K562 (cell line): ENCODE measurements at regions of chr6 and their contacts with region 1.

Region 1: GRCh38 chr6:4775584-4776494 is at the start of gene CDYL:
- DNase-seq: peak; percentile 93 to 97 (median 96)
- ATAC-seq: peak; percentile 92
- H3K4me3 ChIP-seq: peak within 1 kb of the TSS; percentile 57
- H3K27ac ChIP-seq: peak within 1 kb of the TSS; percentile 80
- H3K4me1 ChIP-seq: peaks cover 10 to 23% of the 10 kb centered on the region in 2 experiments
- H3K27me3 ChIP-seq: no peaks in the 10 kb centered on the region; a peak in 1 of 5 replicates
- CTCF ChIP-seq: no peak
- EP300 ChIP-seq: no peak
- POLR2A ChIP-seq: no peak
- RAD21 ChIP-seq: no peak
- polyA plus RNA-seq, gene CDYL: 8.1 to 8.9 TPM

Region 2: GRCh38 chr6:3822747-3823450 is 952.9 kb before region 1 on chr6:
- CTCF ChIA-PET with region 1: no interaction called
- POLR2A ChIA-PET with region 1: no interaction called
- in situ Hi-C with region 1: no loop called
- intact Hi-C with region 1: no loop called
- DNase-seq: no peak
- ATAC-seq: no peak
- H3K4me3 ChIP-seq: no peak overlapping the region
- H3K27ac ChIP-seq: no peak overlapping the region
- H3K4me1 ChIP-seq: no peaks in the 10 kb centered on the region
- H3K27me3 ChIP-seq: peaks cover 59 to 77% of the 10 kb centered on the region in 2 experiments
- CTCF ChIP-seq: no peak
- EP300 ChIP-seq: no peak
- POLR2A ChIP-seq: no peak
- RAD21 ChIP-seq: no peak

Region 3: DNA sequence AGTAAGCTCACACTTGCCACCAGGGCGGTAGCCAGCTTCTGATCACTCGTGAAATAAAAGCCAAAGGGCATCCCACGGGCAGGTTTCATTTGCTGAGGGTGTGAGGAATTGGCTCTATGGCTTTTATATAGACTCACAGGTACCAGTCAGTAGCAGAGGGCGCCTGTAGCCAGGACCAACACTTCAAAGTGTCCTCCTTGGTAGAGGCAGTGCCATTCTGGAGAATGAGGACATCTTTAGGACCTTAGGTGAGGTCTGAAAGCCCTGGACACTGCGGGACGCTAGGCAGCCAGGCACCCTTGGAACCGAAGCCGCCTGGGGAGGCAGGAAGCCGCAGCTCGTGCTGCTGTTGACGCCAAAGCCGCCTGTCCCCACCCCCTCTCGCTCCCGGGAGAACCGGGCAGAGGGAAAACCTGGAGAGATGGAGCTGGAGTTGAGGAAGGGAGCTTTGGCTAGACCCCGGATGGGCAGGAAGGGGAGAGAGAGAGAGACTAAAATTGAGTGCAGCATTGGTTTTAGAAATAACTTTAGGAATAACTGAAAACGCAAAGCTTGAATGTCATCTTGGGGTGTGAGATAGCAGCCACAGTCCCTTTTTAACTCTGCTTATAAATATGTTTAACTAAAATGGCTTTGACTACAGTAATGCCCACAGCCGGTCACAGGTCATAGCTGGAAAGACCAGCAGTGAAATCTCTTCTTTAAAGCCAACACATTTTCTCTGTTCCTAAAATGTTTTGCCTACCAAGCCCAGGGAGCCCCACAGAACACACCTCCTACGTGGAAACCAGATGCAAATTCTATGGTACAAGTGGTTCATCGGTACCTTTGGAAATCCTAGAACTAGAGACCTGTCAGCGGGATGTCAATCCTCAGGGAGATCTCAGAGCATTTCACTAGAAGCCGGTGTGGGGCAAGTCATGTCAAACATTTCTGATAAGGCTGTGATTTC is 128.1 kb before region 1 on chr6:
- CTCF ChIA-PET with region 1: no interaction called
- POLR2A ChIA-PET with region 1: interaction called, 3 read pairs
- in situ Hi-C with region 1: no loop called
- intact Hi-C with region 1: loop called (anchors 2 kb)
- DNase-seq: peak; percentile 87 to 90 (median 87)
- ATAC-seq: peak; percentile 97
- H3K4me3 ChIP-seq: peak overlapping the region; percentile 0; the same call in 1 of the 2 replicates
- H3K27ac ChIP-seq: peak overlapping the region; percentile 51; the same call in 2 of the 3 replicates
- H3K4me1 ChIP-seq: peaks cover 6 to 7% of the 10 kb centered on the region in 2 experiments; a peak in 4 of 5 replicates
- H3K27me3 ChIP-seq: no peaks in the 10 kb centered on the region; a peak in 1 of 5 replicates
- CTCF ChIP-seq: no peak
- EP300 ChIP-seq: peak; percentile 72
- POLR2A ChIP-seq: no peak
- RAD21 ChIP-seq: peak; percentile 29 to 57

Region 4: DNA sequence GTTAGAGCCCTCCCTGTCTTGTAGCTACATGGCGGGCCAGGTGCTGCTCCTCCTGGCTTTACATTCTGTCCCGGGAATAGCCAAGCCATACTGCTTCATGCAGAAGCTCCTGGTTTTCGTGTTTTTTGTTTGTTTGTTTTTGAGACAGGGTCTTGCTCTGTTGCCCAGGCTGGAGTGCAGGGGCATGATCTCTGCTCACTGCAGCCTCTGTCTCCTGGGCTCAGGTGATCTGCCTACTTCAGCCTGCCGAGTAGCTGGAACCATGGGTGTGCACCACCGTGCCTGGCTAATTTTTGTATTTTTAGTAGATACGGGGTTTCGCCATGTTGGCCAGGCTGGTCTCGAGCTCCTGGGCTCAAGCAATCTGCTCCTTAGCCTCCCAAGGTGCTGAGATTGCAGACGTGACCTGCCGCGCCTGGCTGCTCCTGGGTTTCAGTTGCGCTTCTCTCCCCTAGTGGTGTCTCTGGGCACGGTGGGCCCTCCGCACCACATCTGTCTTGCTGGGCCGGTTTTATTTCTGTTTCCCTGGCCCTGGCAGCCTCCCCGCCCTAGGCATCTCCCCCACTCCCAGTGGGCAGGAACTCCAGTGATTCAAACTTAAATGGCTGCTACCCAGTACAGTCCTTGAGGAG is 13.2 kb after region 1 on chr6:
- CTCF ChIA-PET with region 1: no interaction called
- POLR2A ChIA-PET with region 1: interaction called, 12 read pairs
- in situ Hi-C with region 1: no loop called
- intact Hi-C with region 1: no loop called
- DNase-seq: no peak
- ATAC-seq: peak; percentile 36; the same call in 2 of the 3 replicates
- H3K4me3 ChIP-seq: no peak overlapping the region
- H3K27ac ChIP-seq: no peak overlapping the region
- H3K4me1 ChIP-seq: peaks cover 5 to 18% of the 10 kb centered on the region in 2 experiments; a peak in 4 of 5 replicates
- H3K27me3 ChIP-seq: no peaks in the 10 kb centered on the region
- CTCF ChIP-seq: 0 out of 6 replicates have a peak, but pooled peaks of 1 of the 3 experiments have one; percentile 9
- EP300 ChIP-seq: no peak
- POLR2A ChIP-seq: no peak
- RAD21 ChIP-seq: no peak

Region 5: DNA sequence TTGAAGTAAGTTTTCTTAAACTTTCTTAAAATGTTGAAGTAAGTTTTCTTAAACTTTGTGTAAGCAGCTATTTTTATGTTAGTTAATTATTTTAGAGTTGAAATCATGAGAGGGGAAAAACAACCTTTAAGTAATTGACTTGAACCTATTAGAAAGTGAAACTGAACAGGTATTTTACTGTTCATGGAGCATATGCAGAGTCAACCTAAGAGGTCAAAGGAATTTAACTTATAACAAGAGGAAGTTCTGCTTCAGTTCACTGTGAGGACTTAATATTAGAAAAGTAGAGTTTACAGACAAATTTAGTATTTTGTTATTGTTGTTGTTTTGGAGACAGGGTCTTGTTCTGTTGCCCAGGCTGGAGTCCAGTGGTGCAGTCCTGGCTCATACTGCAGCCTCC is 38.4 kb after region 1 on chr6:
- CTCF ChIA-PET with region 1: no interaction called
- POLR2A ChIA-PET with region 1: no interaction called
- in situ Hi-C with region 1: no loop called
- intact Hi-C with region 1: no loop called
- DNase-seq: no peak
- ATAC-seq: no peak
- H3K4me3 ChIP-seq: no peak overlapping the region
- H3K27ac ChIP-seq: no peak overlapping the region
- H3K4me1 ChIP-seq: peaks cover 0 to 22% of the 10 kb centered on the region in 2 experiments; a peak in 3 of 5 replicates
- H3K27me3 ChIP-seq: no peaks in the 10 kb centered on the region
- CTCF ChIP-seq: no peak
- EP300 ChIP-seq: no peak
- POLR2A ChIP-seq: no peak
- RAD21 ChIP-seq: no peak